ENCODE measurements at regions of chr18 and their contacts with region 1.

Region 1: GRCh38 chr18:58998401-58999203 is 133.9 kb downstream of the ZNF532 start:
- DNase-seq: no peak
- ATAC-seq: no peak
- H3K4me3 Mint-ChIP-seq: no peak overlapping the region
- H3K27ac Mint-ChIP-seq: no peak overlapping the region
- H3K4me1 Mint-ChIP-seq: peaks cover 27% of the 10 kb centered on the region
- H3K27me3 Mint-ChIP-seq: no peaks in the 10 kb centered on the region
- CTCF ChIP-seq: no peak

Region 2: DNA sequence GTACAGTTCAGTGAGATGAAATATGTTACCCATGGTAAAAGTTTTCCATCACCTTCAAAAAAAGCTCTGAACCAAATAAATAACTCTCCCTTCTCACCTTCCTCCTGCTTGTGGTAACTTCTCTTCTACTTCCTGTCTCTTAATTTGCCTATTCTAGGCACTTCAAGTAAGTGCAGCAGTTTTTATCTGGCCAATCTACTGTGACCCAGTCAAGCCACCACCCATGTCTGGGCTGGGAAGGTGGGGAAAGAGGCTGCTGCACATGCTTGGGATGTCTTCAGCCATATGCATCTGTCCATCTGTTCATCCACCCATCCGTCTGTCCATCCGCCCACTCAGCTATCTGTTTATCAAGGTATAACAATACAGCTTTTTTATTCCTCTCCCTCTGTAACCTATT is 102.3 kb before region 1 on chr18:
- CTCF ChIA-PET with region 1: no interaction called
- POLR2A ChIA-PET with region 1: no interaction called
- DNase-seq: no peak
- ATAC-seq: no peak
- H3K4me3 Mint-ChIP-seq: no peak overlapping the region
- H3K27ac Mint-ChIP-seq: peak overlapping the region; percentile 91
- H3K4me1 Mint-ChIP-seq: peaks cover 86% of the 10 kb centered on the region
- H3K27me3 Mint-ChIP-seq: no peaks in the 10 kb centered on the region
- CTCF ChIP-seq: no peak

Region 3: GRCh38 chr18:59144483-59144882 is 145.9 kb after region 1 on chr18:
- CTCF ChIA-PET with region 1: no interaction called
- POLR2A ChIA-PET with region 1: interaction called, 11 read pairs
- DNase-seq: no peak
- ATAC-seq: no peak
- H3K4me3 Mint-ChIP-seq: no peak overlapping the region
- H3K27ac Mint-ChIP-seq: no peak overlapping the region
- H3K4me1 Mint-ChIP-seq: peaks cover 21% of the 10 kb centered on the region
- H3K27me3 Mint-ChIP-seq: no peaks in the 10 kb centered on the region; the same call in 1 of the 2 replicates
- CTCF ChIP-seq: no peak

Measured in WTC11 (cell line).